ENCODE measurements at regions of chr1 and their contacts with region 1.

Region 1: GRCh38 chr1:113140588-113141446 is 67.8 kb downstream of the LRIG2 start:
- DNase-seq: peak; percentile 77

Region 2: GRCh38 chr1:113191579-113192076 is 50.8 kb after region 1 on chr1:
- in situ Hi-C with region 1: no loop called
- DNase-seq: peak; percentile 73

Region 3: GRCh38 chr1:113677250-113678158 is 536.7 kb after region 1 on chr1:
- in situ Hi-C with region 1: loop called (anchors 25 kb)
- DNase-seq: peak; percentile 58